Heart left ventricle (tissue), 16 donors: ENCODE measurements at regions of chr6 and their contacts with region 1.

Region 1: DNA sequence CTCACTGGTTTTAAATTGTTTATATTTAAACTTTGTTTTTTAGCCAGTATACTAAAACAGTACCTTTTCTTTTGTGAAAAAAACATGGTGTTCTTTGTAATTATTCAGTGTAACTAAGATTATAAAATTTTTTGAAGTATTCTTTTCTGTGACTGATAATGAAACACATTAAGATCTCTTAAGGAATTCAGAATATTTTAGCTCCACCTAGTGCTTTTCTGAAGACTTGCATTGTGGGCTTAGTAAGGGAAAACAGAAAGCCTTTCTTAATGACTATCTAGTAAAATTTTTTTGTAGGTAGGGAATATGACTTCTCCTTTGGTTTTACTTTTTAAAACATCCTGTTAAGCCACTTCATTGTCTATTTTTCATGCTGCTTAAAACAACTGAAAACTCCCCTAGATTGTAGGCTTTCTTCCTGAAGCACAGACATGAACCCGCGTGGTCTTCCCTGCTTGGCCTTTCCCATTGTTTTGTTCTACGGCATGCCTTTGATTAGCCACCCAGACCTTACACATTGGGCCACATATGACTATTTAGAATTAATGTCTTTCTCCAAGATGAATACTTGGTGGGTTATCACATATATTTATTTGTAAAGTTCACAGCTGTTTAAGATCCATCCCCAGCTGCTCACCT is 72.1 kb downstream of the AFDN start:
- DNase-seq: no peak
- ATAC-seq: peak in 1 of 4 donors; percentile 62
- H3K4me3 ChIP-seq: no peak overlapping the region
- H3K27ac ChIP-seq: no peak overlapping the region
- H3K4me1 ChIP-seq: peaks cover 0 to 3% (median 0%) of the 10 kb centered on the region in 12 donors
- H3K27me3 ChIP-seq: no peaks in the 10 kb centered on the region
- CTCF ChIP-seq: peak; percentile 53 to 89 (median 80)
- POLR2A ChIP-seq: no peak

Region 2: DNA sequence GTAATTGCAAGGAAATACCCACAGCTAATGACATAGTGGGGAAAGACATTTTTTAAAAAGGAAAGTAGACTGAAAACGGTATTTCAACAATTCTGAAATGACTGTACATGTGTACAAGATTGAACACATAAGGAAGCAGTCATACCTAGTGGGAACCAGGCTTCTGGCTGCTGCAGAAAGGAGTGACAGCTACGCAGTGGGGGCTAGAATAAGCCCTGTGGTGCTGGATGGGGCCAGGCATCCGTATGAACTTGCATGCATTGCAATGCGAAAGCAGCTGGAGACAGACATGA is 686.1 kb before region 1 on chr6:
- intact Hi-C with region 1: loop called in 3 of 10 experiments (anchors 5 to 10 kb)
- DNase-seq: no peak
- ATAC-seq: no peak
- H3K4me3 ChIP-seq: no peak overlapping the region
- H3K27ac ChIP-seq: no peak overlapping the region
- H3K4me1 ChIP-seq: peaks cover 0 to 2% (median 0%) of the 10 kb centered on the region in 12 donors
- H3K27me3 ChIP-seq: peaks cover 0 to 12% (median 0%) of the 10 kb centered on the region in 9 donors
- CTCF ChIP-seq: no peak
- POLR2A ChIP-seq: no peak

Region 3: DNA sequence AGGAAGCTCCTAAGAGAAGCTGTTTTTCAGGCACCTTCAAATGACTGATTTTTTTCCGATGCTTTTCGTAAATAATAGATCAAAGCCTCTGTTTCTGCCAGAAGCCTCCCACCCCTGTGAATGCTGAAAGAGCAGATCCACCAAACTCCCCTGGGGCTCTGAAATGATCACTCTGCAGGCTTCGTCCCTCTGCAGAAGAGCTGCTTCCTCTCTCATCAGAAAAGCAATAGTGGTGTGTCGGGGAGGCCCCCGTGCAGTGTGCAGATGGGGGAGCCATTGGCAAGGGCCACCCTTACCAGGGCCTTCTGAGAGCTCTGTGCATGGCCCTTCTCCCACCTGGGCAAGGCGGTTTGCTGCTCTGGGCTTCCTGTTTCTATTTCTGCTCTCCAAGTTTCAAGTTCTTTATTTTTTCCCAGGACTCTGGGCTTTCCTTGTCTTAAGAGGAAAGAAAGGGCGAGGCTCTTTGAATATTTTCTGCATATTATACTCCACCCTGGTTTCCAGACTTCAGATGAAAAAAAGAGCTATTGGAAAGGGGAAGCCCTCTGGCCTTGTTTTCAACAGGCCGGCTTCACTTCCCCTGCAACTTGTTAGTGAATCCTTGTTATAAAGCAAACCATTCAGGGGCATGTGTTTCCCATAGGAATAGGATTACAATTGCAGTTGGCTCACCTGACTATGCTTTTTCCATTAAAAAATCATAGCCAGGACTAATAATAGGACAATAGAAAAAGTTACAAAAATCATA is 418.7 kb before region 1 on chr6:
- intact Hi-C with region 1: loop called in 9 of 10 experiments (anchors 2 to 5 kb)
- DNase-seq: peak in 1 of 5 donors; percentile 38
- ATAC-seq: peak; percentile 50 to 80 (median 67)
- H3K4me3 ChIP-seq: no peak overlapping the region
- H3K27ac ChIP-seq: peak overlapping the region in 10 of 12 donors; percentile 26 to 68 (median 51)
- H3K4me1 ChIP-seq: peaks cover 0 to 23% (median 7%) of the 10 kb centered on the region in 12 donors
- H3K27me3 ChIP-seq: no peaks in the 10 kb centered on the region
- CTCF ChIP-seq: no peak
- POLR2A ChIP-seq: no peak

Region 4: DNA sequence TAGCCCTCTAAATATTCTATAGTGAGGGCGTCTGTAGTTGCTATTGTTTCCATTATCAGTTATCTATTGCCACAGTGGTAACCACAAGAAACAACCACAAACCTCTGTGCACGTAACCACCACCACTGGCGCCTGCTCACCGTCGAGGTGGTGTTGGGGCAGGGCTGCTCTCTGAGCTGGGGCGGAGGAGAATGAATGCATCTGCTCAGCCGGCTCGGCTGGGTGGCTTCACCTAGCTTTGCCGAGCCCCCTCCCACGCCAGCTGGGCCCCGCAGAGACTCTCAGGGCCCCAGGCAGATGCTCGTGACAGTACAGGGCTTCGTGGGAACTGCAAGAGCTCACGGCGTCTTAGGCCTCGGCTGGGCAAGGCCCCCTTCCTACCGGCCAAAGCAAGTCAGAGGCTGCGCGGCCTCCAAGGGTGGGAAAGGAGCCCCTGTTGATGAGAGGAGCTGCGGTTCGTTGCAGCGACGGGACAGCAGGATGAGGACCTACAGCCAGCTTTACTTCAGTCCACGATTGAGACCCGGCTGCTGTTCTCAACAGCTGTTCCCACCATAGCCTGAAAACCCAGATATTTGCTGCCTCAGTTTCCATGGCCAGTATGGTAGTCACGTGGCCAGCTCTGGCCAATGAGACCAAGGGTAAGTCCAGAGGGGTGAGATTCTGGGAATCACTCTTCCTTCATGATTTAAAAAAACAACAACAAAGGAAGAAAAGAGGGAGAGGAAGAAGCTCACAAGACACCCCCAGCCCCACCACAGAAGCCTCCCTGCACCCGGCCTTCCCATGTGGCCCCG is 192.3 kb before region 1 on chr6:
- intact Hi-C with region 1: loop called in 1 of 10 experiments (anchors 10 kb)
- DNase-seq: no peak
- ATAC-seq: no peak
- H3K4me3 ChIP-seq: no peak overlapping the region
- H3K27ac ChIP-seq: no peak overlapping the region
- H3K4me1 ChIP-seq: peaks cover 0 to 5% (median 0%) of the 10 kb centered on the region in 12 donors
- H3K27me3 ChIP-seq: no peaks in the 10 kb centered on the region
- CTCF ChIP-seq: no peak
- POLR2A ChIP-seq: no peak

Region 5: DNA sequence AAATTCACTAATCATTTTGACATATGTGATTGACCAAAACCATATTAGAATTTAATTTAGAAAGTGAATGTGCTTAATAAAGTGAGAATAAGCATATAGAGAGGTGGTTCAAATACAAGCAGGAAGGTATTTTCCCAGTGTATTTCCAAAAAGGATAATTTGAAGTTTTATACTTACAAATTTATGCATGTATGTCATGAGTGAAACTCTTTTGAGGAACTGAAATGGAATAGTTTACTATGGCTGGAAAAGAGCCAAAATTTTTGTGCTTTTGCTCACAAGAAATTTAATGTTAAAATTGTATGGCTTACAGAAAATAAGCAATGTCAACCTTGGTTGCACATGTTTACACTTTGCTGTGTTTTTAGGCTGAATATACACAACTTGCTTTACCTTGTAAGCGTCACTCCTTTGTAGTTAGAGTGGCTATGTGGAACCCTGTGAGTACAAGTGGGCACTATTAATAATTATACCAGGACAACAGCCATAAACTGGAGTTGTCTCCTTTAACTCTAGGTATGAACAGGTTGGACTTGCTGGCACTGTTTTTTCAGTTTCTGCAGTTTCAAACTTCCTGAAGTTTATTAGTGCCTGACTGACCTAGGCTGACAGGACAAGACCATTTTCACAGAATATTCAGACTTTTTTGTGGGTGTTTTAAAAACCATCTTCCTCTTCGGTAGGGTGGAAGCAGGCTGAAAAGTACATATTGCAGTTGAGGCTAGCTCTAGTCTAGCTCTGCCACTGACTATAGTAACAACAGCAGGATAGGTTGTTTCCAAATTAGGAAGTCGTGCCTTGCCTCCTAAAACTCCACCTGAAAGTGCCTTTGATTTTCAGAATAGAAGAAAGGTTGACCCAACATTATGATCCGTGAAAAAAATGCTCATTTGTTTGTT is 66.0 kb before region 1 on chr6:
- intact Hi-C with region 1: loop called in 3 of 10 experiments (anchors 5 to 10 kb)
- DNase-seq: no peak
- ATAC-seq: peak in 2 of 4 donors; percentile 41 to 45
- H3K4me3 ChIP-seq: peak overlapping the region in 1 of 12 donors; percentile 23
- H3K27ac ChIP-seq: peak overlapping the region in 1 of 12 donors; percentile 65
- H3K4me1 ChIP-seq: peaks cover 0 to 71% (median 37%) of the 10 kb centered on the region in 12 donors
- H3K27me3 ChIP-seq: peaks cover 0 to 16% (median 0%) of the 10 kb centered on the region in 9 donors
- CTCF ChIP-seq: no peak
- POLR2A ChIP-seq: no peak

Region 6: GRCh38 chr6:167945937-167946485 is 47.2 kb after region 1 on chr6:
- intact Hi-C with region 1: no loop called
- DNase-seq: no peak
- ATAC-seq: no peak
- H3K4me3 ChIP-seq: no peak overlapping the region
- H3K27ac ChIP-seq: no peak overlapping the region
- H3K4me1 ChIP-seq: no peaks in the 10 kb centered on the region
- H3K27me3 ChIP-seq: no peaks in the 10 kb centered on the region
- CTCF ChIP-seq: no peak
- POLR2A ChIP-seq: no peak

Region 7: GRCh38 chr6:168078175-168078942 is 179.6 kb after region 1 on chr6:
- intact Hi-C with region 1: no loop called
- DNase-seq: no peak
- ATAC-seq: no peak
- H3K4me3 ChIP-seq: no peak overlapping the region
- H3K27ac ChIP-seq: no peak overlapping the region
- H3K4me1 ChIP-seq: peaks cover 0 to 11% (median 3%) of the 10 kb centered on the region in 12 donors
- H3K27me3 ChIP-seq: no peaks in the 10 kb centered on the region
- CTCF ChIP-seq: no peak
- POLR2A ChIP-seq: no peak

Region 8: GRCh38 chr6:168326294-168327261 is 427.8 kb after region 1 on chr6:
- intact Hi-C with region 1: no loop called
- DNase-seq: no peak
- ATAC-seq: peak in 3 of 4 donors; percentile 75 to 92 (median 90)
- H3K4me3 ChIP-seq: no peak overlapping the region
- H3K27ac ChIP-seq: peak overlapping the region in 7 of 12 donors; percentile 22 to 70 (median 43)
- H3K4me1 ChIP-seq: no peaks in the 10 kb centered on the region
- H3K27me3 ChIP-seq: peaks cover 0 to 67% (median 5%) of the 10 kb centered on the region in 9 donors
- CTCF ChIP-seq: no peak
- POLR2A ChIP-seq: no peak